Left cardiac atrium (tissue), 4 donors: ENCODE measurements at regions of chr19 and their contacts with region 1.

Region 1: DNA sequence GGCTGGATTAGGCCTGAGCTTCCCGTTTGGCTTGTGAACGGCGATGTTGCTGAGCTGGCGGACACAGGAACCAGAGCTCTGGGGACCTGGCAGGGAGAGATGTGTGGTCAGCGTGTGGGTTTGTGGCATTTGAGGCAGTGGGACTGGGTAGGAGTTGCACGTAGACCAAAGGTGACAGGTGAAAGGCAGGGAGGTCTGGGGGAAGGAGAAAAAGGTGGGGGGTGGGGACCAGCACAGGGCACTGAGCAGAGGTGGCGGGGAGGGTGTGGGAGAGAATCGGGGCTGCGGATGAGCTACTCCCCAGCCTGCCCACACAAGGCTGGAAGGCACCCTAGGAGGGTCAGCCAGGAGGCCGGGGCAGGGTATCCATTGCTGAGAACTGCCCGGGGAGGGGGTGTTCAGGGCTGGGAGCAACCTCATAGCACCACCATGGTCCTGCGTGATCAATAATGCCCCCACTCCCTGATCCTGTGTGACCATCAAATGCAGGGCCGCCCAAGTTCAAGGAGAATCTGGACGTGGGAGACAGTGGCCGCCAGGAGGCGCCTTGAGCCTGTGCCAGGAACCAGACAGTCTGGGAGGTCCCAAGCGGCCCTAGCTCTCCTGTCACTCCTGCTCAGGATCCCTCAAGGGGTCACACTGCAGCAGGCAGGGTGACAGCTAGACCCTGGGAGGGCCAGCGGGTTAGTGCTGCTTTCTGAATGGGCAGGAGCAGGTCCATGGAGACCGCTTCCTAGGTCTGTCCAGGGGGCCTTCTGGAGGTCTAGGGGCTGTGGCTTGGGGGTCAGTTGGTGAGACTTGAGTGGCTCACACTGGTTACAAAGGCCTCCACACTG is 12.8 kb upstream of the SELENOW start:
- DNase-seq: peak; percentile 81
- ATAC-seq: peak; percentile 76 to 82

Region 2: GRCh38 chr19:47790398-47790814 is 24.7 kb after region 1 on chr19:
- intact Hi-C with region 1: loop called in 1 of 2 experiments (anchors 1 kb)
- DNase-seq: peak; percentile 89
- ATAC-seq: peak; percentile 73 to 80

Region 3: GRCh38 chr19:48321622-48322591 is 556.2 kb after region 1 on chr19:
- intact Hi-C with region 1: no loop called
- DNase-seq: peak; percentile 99
- ATAC-seq: peak; percentile 91 to 92